GM12878 (cell line): ENCODE measurements at regions of chr2 and their contacts with region 1.

Region 1: GRCh38 chr2:195559431-195559914 is 97.6 kb upstream of the SLC39A10 start:
- DNase-seq: peak; percentile 99
- ATAC-seq: peak; percentile 72
- H3K4me3 ChIP-seq: 0 out of 2 replicates have a peak overlapping the region, but pooled peaks have one; percentile 6
- H3K27ac ChIP-seq: peak overlapping the region; percentile 94
- H3K4me1 ChIP-seq: peaks cover 39% of the 10 kb centered on the region
- H3K27me3 ChIP-seq: no peaks in the 10 kb centered on the region
- CTCF ChIP-seq: no peak
- EP300 ChIP-seq: peak; percentile 88 to 97
- POLR2A ChIP-seq: no peak
- RAD21 ChIP-seq: 0 out of 2 replicates have a peak, but pooled peaks have one; percentile 15

Region 2: DNA sequence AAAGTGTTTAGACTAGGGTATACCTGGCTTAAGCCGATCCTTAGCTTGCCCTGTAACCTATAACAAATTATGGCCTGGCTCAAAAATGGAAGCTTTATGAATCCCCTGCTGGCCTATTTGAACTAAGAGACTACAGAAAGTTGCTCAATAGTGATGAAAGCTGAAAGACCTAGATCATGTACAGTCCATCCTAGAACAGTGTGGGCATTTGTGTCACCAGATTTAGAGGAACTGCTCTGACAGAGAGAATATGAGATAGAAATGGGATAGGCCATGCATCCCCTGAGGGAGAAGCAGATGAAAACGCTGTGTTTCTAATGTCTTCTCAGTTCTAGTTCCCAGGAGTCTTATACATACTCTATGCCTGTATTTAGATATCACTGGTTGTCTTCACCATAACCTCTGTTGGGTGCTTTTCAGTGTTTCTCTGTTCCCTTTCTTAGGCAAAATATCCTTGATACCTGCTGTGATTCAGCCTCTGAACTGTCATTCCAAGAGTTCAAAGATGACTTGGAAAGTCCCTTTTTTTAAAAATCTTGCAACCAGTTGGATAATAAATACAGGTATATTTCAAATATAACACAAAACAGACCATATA is 149.3 kb before region 1 on chr2:
- CTCF ChIA-PET with region 1: no interaction called
- POLR2A ChIA-PET with region 1: interaction called, 4 read pairs
- RAD21 ChIA-PET with region 1: interaction called, 12 read pairs
- SMC1A ChIA-PET with region 1: interaction called, 4 read pairs
- in situ Hi-C with region 1: no loop called
- intact Hi-C with region 1: loop called (anchors 2 kb)
- DNase-seq: peak; percentile 60
- ATAC-seq: peak; percentile 80
- H3K4me3 ChIP-seq: no peak overlapping the region
- H3K27ac ChIP-seq: peak overlapping the region; percentile 29
- H3K4me1 ChIP-seq: no peaks in the 10 kb centered on the region
- H3K27me3 ChIP-seq: no peaks in the 10 kb centered on the region
- CTCF ChIP-seq: no peak
- EP300 ChIP-seq: peak; percentile 68 to 83; a peak in 3 of 4 replicates
- POLR2A ChIP-seq: no peak
- RAD21 ChIP-seq: no peak

Region 3: DNA sequence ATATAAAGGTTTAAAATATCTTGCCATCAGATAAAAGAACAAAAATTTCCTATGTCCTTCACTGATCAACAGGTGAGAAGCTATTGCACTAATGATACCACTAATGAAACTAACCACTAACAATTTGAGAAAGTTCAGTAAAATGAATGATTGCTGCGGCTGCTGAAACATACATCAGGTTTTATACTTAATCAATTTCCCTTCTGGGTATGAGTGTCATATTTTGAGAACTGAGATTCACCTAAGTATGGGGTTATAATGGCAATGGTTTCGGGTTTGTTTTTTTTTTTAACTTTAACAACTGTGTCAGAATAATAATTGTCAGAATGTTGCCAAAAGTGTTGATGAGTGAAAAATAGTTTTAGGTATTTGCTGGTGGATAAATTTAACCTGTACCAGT is 53.8 kb before region 1 on chr2:
- CTCF ChIA-PET with region 1: interaction called, 7 read pairs
- POLR2A ChIA-PET with region 1: interaction called, 7 read pairs
- RAD21 ChIA-PET with region 1: interaction called, 45 read pairs
- SMC1A ChIA-PET with region 1: interaction called, 62 read pairs
- in situ Hi-C with region 1: loop called (anchors 5 kb)
- intact Hi-C with region 1: loop called (anchors 1 kb)
- DNase-seq: peak; percentile 83
- ATAC-seq: peak; percentile 95
- H3K4me3 ChIP-seq: no peak overlapping the region
- H3K27ac ChIP-seq: no peak overlapping the region
- H3K4me1 ChIP-seq: peaks cover 3% of the 10 kb centered on the region; the same call in 1 of the 2 replicates
- H3K27me3 ChIP-seq: no peaks in the 10 kb centered on the region
- CTCF ChIP-seq: no peak
- EP300 ChIP-seq: peak; percentile 95 to 97
- POLR2A ChIP-seq: no peak
- RAD21 ChIP-seq: no peak

Region 4: DNA sequence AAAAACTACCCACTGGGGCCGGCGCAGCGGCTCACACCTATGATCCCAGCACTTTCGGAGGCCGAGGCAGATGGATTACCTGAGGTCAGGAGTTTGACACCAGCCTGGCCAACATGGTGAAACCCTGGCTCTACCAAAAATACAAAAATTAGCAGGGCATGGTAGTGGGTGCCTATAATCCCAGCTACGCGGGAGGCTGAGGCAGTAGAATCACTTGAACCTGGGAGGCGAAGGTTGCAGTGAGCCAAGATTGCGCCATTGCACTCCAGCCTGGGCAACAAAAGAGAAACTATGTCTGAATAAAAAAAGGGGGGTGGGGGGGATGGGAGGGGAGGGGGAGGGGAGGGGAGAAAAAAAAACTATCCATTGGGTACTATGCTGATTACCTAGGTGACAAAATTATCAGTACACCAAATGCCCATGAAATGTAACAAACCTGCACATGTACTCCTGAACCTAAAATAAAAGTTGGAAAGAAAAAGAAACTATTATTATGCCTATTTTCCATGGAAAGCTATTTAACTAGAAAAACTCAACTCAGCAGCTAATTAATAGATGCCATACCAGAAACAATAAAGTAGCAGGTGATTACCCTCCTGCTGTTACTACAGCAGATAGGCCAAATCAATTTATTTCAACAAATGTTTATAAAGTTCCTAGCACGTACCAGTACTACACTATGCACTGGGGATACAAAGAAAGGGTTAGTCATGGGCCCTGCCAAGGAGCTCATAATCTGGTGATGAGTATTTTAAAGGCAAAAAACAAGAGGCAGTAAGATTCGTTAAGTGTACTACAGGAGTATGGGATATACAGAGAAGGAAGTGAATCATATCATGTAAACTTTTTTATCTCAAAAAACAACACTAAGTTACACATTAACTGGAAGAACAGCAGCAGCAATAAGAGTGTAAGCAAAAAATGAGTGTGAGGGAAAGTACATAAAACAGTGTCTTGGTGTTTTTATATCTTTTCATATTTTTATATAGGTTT is 15.3 kb before region 1 on chr2:
- CTCF ChIA-PET with region 1: interaction called, 218 read pairs
- POLR2A ChIA-PET with region 1: interaction called, 109 read pairs
- RAD21 ChIA-PET with region 1: interaction called, 282 read pairs
- SMC1A ChIA-PET with region 1: interaction called, 435 read pairs
- in situ Hi-C with region 1: no loop called
- intact Hi-C with region 1: no loop called
- DNase-seq: no peak
- ATAC-seq: peak; percentile 94
- H3K4me3 ChIP-seq: no peak overlapping the region
- H3K27ac ChIP-seq: no peak overlapping the region
- H3K4me1 ChIP-seq: no peaks in the 10 kb centered on the region
- H3K27me3 ChIP-seq: no peaks in the 10 kb centered on the region
- CTCF ChIP-seq: no peak
- EP300 ChIP-seq: peak; percentile 25 to 56; a peak in 1 of 4 replicates
- POLR2A ChIP-seq: no peak
- RAD21 ChIP-seq: no peak

Region 5: GRCh38 chr2:195674491-195675221 is 115.2 kb after region 1 on chr2:
- CTCF ChIA-PET with region 1: no interaction called
- POLR2A ChIA-PET with region 1: no interaction called
- RAD21 ChIA-PET with region 1: no interaction called
- SMC1A ChIA-PET with region 1: no interaction called
- in situ Hi-C with region 1: no loop called
- intact Hi-C with region 1: no loop called
- DNase-seq: no peak
- ATAC-seq: no peak
- H3K4me3 ChIP-seq: no peak overlapping the region
- H3K27ac ChIP-seq: no peak overlapping the region
- H3K4me1 ChIP-seq: no peaks in the 10 kb centered on the region
- H3K27me3 ChIP-seq: no peaks in the 10 kb centered on the region
- CTCF ChIP-seq: no peak
- EP300 ChIP-seq: no peak
- POLR2A ChIP-seq: no peak
- RAD21 ChIP-seq: no peak